Activated T-helper 1 cell treated with anti-CD3 and anti-CD28 coated beads, Interleukin-12 subunit alpha, Interleukin-12 subunit beta, Interleukin-2, Interleukin-4 antibody, amounts not matched to agents 30 ng/mL and 10 ng/mL and 1 ng/mL, durations not matched to agents 14 hours and 24 hours and 36 hours (primary cell): ENCODE measurements at regions of chr18 and their contacts with region 1.

Region 1: GRCh38 chr18:10767658-10768057 is 241.8 kb downstream of the NAPG start:
- DNase-seq: no peak
- H3K4me3 Mint-ChIP-seq: no peak overlapping the region
- H3K27ac Mint-ChIP-seq: no peak overlapping the region
- H3K4me1 Mint-ChIP-seq: no peaks in the 10 kb centered on the region
- H3K27me3 Mint-ChIP-seq: peaks cover 4% of the 10 kb centered on the region

Region 2: GRCh38 chr18:10689236-10690034 is 78.2 kb before region 1 on chr18:
- intact Hi-C with region 1: loop called (anchors 10 kb)
- DNase-seq: no peak
- H3K4me3 Mint-ChIP-seq: no peak overlapping the region
- H3K27ac Mint-ChIP-seq: no peak overlapping the region
- H3K4me1 Mint-ChIP-seq: no peaks in the 10 kb centered on the region
- H3K27me3 Mint-ChIP-seq: no peaks in the 10 kb centered on the region